ENCODE measurements at regions of chr13 and their contacts with region 1.

Region 1: GRCh38 chr13:91375116-91375729 is 23.2 kb upstream of the GPC5 start:
- DNase-seq: no peak
- H3K4me3 Mint-ChIP-seq: no peak overlapping the region
- H3K27ac Mint-ChIP-seq: no peak overlapping the region
- H3K4me1 Mint-ChIP-seq: peaks cover 3% of the 10 kb centered on the region
- H3K27me3 Mint-ChIP-seq: peaks cover 2% of the 10 kb centered on the region

Region 2: DNA sequence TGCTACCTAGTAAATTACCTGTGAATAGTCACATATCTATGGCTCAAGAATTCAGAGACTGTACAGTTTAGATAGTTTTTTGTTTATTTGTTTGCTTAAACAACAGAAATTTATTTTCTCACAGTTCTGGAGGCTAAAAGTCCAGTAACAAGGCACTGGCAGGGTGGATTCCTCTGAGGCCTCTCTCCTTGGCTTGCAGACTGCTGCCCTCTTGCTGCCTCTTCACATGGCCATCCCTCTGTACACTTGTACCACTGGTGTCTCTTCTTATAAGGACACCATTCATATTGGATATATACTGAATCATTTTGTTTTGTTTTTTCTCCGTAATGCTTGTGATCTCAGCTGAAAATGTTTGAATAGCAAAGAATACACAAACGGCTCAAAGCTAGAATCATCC is 84.1 kb before region 1 on chr13:
- CTCF ChIA-PET with region 1: no interaction called
- POLR2A ChIA-PET with region 1: no interaction called
- intact Hi-C with region 1: no loop called
- DNase-seq: no peak
- H3K4me3 Mint-ChIP-seq: no peak overlapping the region
- H3K27ac Mint-ChIP-seq: no peak overlapping the region
- H3K4me1 Mint-ChIP-seq: no peaks in the 10 kb centered on the region
- H3K27me3 Mint-ChIP-seq: peaks cover 1% of the 10 kb centered on the region

Region 3: DNA sequence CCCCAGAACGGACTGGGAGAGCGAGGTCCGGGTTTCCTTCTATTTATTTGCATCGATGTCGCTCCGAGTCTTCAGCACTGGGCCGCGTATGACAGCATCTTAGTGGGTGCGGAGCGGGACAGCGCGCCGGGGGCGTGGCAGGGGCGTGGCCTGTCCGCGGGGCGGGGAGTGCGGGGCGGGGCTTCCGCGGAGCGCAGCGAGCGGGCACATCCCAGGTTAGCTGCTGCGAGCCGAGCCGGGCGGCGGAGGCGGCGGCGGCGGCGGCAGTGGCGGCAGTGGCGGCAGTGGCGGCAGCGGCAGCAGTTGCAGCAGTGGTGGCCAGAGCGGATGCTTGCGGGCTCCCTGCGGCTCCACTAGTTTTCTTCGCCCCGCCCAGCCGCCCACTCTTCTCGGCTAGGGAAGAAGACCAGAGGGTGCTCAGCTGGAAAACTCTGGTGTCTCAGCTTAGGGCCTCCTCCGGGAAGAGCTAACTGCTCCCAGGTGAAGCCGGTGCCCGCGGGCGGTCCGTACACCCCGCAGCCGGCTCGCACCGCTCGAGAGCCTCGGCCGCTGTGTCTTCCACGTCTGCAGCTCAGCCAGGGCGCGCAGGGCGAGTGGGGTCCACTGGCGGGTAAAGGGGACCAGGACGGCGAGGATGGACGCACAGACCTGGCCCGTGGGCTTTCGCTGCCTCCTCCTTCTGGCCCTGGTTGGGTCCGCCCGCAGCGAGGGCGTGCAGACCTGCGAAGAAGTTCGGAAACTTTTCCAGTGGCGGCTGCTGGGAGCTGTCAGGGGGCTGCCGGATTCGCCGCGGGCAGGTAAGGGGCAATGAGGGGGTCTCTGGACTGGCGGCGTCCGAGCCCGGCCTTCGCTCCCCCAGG is 23.4 kb after region 1 on chr13 and contains the start of gene GPC5:
- CTCF ChIA-PET with region 1: no interaction called
- POLR2A ChIA-PET with region 1: no interaction called
- intact Hi-C with region 1: loop called (anchors 1 kb)
- DNase-seq: peak; percentile 91
- H3K4me3 Mint-ChIP-seq: peak within 1 kb of the TSS; percentile 69
- H3K27ac Mint-ChIP-seq: peak within 1 kb of the TSS; percentile 21
- H3K4me1 Mint-ChIP-seq: peaks cover 9% of the 10 kb centered on the region
- H3K27me3 Mint-ChIP-seq: peaks cover 44% of the 10 kb centered on the region
- total RNA-seq, gene GPC5: 0.17 to 0.29 TPM

Region 4: GRCh38 chr13:91406619-91407018 is 31.4 kb after region 1 on chr13:
- CTCF ChIA-PET with region 1: interaction called, 11 read pairs
- POLR2A ChIA-PET with region 1: no interaction called
- intact Hi-C with region 1: no loop called
- DNase-seq: peak; percentile 21
- H3K4me3 Mint-ChIP-seq: no peak overlapping the region
- H3K27ac Mint-ChIP-seq: no peak overlapping the region
- H3K4me1 Mint-ChIP-seq: no peaks in the 10 kb centered on the region
- H3K27me3 Mint-ChIP-seq: peaks cover 11% of the 10 kb centered on the region